ENCODE measurements at regions of chr15 and their contacts with region 1.

Region 1: DNA sequence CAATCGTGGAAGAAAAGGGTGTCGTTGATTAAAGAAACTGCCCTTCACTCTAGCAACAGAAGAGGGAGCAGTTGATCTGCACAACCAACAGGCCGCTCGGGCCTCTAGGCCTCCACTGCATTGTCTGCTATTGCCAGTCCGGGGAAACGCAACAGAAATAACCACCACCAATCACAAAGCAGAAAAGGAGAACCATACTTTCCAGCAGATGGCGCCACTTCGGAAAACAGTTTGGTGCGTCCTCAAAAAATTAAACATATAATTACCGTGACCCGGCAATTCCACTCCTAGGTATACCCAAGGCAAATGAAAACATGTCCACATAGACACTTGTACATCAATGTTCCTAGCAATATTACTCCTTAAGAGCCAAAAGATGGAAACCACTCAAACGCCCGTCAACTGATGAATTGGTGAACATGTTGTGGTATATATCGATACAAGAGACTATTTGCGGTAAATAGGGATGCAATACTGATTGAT is 154.1 kb downstream of the TJP1 start:
- DNase-seq: peak; percentile 93
- ATAC-seq: peak; percentile 99
- H3K4me3 ChIP-seq: no peak overlapping the region
- H3K27ac ChIP-seq: no peak overlapping the region
- H3K4me1 ChIP-seq: peaks cover 6 to 21% of the 10 kb centered on the region in 2 experiments; a peak in 3 of 4 replicates
- H3K27me3 ChIP-seq: no peaks in the 10 kb centered on the region
- CTCF ChIP-seq: peak; percentile 86 to 98 (median 97)
- POLR2A ChIP-seq: no peak
- RAD21 ChIP-seq: peak; percentile 90

Region 2: DNA sequence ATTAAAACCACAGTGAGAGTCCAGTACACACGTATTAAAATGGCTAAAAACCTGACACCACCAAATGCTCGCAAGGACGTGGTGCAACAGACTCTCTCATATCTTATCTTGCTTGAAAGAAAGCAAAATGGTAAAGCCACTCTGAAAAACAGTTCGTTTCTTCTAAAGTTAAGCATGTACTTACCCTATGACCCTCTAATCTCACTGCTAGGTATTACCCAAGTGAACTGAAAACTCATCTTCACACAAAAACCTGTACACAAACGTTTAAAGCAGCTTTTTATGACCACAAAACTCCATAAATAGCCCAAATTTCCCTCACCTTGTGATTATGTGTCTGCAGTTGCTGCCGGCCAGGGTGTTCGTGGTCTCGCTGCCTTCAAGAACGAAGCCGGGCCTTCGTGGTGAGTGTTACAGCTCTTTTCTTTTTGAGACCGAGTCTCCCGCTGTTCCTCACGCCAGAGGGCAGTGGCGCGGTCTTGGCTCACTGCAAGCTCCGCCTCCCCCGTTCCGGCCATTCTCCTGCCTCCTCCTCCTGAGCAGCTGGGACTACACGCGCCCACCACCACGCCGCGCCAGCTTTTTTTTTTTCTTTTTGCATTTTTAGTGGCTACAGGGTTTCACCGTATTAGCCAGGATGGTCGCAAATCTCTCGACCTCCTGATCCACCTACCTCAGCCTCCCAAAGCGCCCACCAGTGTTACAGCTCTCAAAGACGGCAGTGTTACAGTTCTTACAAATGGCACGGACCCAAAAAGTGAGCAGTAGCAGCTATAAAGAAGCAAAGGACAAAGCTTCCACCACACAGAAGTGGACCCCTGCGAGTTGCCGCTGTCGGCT is 11.3 kb before region 1 on chr15:
- CTCF ChIA-PET with region 1: no interaction called
- POLR2A ChIA-PET with region 1: no interaction called
- RAD21 ChIA-PET with region 1: no interaction called
- intact Hi-C with region 1: no loop called
- DNase-seq: peak; percentile 74
- ATAC-seq: peak; percentile 99
- H3K4me3 ChIP-seq: peak overlapping the region; percentile 27 to 54
- H3K27ac ChIP-seq: no peak overlapping the region
- H3K4me1 ChIP-seq: peaks cover 3 to 10% of the 10 kb centered on the region in 2 experiments; a peak in 3 of 4 replicates
- H3K27me3 ChIP-seq: no peaks in the 10 kb centered on the region
- CTCF ChIP-seq: peak; percentile 28 to 58 (median 48); a peak in 5 of 6 replicates
- POLR2A ChIP-seq: no peak
- RAD21 ChIP-seq: peak; percentile 27; the same call in 1 of the 2 replicates

Region 3: GRCh38 chr15:29740692-29741311 is 72.6 kb after region 1 on chr15:
- CTCF ChIA-PET with region 1: no interaction called
- POLR2A ChIA-PET with region 1: no interaction called
- RAD21 ChIA-PET with region 1: no interaction called
- intact Hi-C with region 1: loop called (anchors 1 kb)
- DNase-seq: no peak
- ATAC-seq: peak; percentile 35
- H3K4me3 ChIP-seq: no peak overlapping the region
- H3K27ac ChIP-seq: no peak overlapping the region
- H3K4me1 ChIP-seq: peaks cover 21 to 35% of the 10 kb centered on the region in 2 experiments
- H3K27me3 ChIP-seq: no peaks in the 10 kb centered on the region
- CTCF ChIP-seq: peak; percentile 32 to 59 (median 54); a peak in 5 of 6 replicates
- POLR2A ChIP-seq: no peak
- RAD21 ChIP-seq: peak; percentile 42; the same call in 1 of the 2 replicates

Region 4: GRCh38 chr15:29935276-29936020 is 267.3 kb after region 1 on chr15:
- CTCF ChIA-PET with region 1: no interaction called
- POLR2A ChIA-PET with region 1: no interaction called
- RAD21 ChIA-PET with region 1: no interaction called
- intact Hi-C with region 1: loop called (anchors 2 kb)
- DNase-seq: no peak
- ATAC-seq: peak; percentile 89
- H3K4me3 ChIP-seq: no peak overlapping the region
- H3K27ac ChIP-seq: no peak overlapping the region
- H3K4me1 ChIP-seq: peaks cover 17 to 48% of the 10 kb centered on the region in 2 experiments; a peak in 3 of 4 replicates
- H3K27me3 ChIP-seq: no peaks in the 10 kb centered on the region
- CTCF ChIP-seq: peak; percentile 49 to 73 (median 67); a peak in 5 of 6 replicates
- POLR2A ChIP-seq: no peak
- RAD21 ChIP-seq: peak; percentile 63

Region 5: GRCh38 chr15:30030350-30030749 is 362.2 kb after region 1 on chr15:
- CTCF ChIA-PET with region 1: no interaction called
- POLR2A ChIA-PET with region 1: no interaction called
- RAD21 ChIA-PET with region 1: no interaction called
- intact Hi-C with region 1: loop called (anchors 1 kb)
- DNase-seq: peak; percentile 13
- ATAC-seq: no peak; the same call in 1 of the 2 replicates
- H3K4me3 ChIP-seq: no peak overlapping the region
- H3K27ac ChIP-seq: no peak overlapping the region
- H3K4me1 ChIP-seq: no peaks in the 10 kb centered on the region
- H3K27me3 ChIP-seq: no peaks in the 10 kb centered on the region
- CTCF ChIP-seq: peak; percentile 31 to 61 (median 37); a peak in 4 of 6 replicates
- POLR2A ChIP-seq: no peak
- RAD21 ChIP-seq: peak; percentile 54

Region 6: DNA sequence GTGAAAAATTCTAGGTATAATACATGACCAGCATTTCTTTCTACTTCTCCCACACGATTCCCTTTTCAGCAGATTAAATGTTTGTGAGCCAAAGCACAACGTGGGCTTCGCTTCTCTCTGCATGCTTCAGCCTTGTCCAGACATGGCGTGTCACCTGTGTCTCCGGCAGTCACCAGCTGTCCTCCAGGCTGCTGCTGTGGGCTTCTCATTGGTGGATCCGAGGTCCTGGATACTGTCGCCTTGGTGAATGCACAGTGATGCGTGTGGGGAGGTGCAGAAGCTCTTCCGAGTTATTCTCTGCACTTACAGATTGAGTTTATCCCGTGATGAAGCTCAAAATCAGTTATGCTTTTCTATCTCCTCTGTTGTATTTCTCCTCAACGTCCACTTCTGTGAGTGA is 391.6 kb after region 1 on chr15:
- CTCF ChIA-PET with region 1: no interaction called
- POLR2A ChIA-PET with region 1: no interaction called
- RAD21 ChIA-PET with region 1: no interaction called
- intact Hi-C with region 1: loop called (anchors 5 kb)
- DNase-seq: no peak
- ATAC-seq: no peak
- H3K4me3 ChIP-seq: no peak overlapping the region
- H3K27ac ChIP-seq: no peak overlapping the region
- H3K4me1 ChIP-seq: no peaks in the 10 kb centered on the region
- H3K27me3 ChIP-seq: no peaks in the 10 kb centered on the region
- CTCF ChIP-seq: no peak
- POLR2A ChIP-seq: no peak
- RAD21 ChIP-seq: no peak

Region 7: DNA sequence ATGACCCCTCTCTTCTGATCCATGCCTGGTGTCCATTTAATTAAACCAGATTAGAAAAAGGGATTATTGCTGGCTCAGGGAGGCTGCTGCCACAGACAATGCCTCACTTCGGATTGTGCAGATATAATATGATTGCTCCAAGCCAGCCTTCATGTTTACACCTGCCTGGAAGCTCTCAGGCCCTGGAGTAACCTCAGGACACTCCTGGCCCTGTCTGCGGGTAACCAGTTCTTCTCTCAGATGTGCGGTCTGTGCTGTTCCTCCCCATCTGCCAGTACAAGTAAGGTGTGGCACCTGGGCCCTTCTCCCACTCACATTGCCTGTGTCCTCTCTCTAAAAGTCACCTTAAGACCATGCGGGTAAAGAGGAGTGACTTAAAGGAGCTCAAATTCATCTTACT is 405.8 kb after region 1 on chr15:
- CTCF ChIA-PET with region 1: no interaction called
- POLR2A ChIA-PET with region 1: no interaction called
- RAD21 ChIA-PET with region 1: no interaction called
- intact Hi-C with region 1: loop called (anchors 1 kb)
- DNase-seq: no peak
- ATAC-seq: no peak
- H3K4me3 ChIP-seq: no peak overlapping the region
- H3K27ac ChIP-seq: no peak overlapping the region
- H3K4me1 ChIP-seq: 0 out of 4 replicates have a peak, but pooled peaks cover 0 to 2% of the 10 kb centered on the region in 2 experiments
- H3K27me3 ChIP-seq: no peaks in the 10 kb centered on the region
- CTCF ChIP-seq: no peak
- POLR2A ChIP-seq: no peak
- RAD21 ChIP-seq: no peak